ENCODE measurements at regions of chr10 and their contacts with region 1.

Region 1: DNA sequence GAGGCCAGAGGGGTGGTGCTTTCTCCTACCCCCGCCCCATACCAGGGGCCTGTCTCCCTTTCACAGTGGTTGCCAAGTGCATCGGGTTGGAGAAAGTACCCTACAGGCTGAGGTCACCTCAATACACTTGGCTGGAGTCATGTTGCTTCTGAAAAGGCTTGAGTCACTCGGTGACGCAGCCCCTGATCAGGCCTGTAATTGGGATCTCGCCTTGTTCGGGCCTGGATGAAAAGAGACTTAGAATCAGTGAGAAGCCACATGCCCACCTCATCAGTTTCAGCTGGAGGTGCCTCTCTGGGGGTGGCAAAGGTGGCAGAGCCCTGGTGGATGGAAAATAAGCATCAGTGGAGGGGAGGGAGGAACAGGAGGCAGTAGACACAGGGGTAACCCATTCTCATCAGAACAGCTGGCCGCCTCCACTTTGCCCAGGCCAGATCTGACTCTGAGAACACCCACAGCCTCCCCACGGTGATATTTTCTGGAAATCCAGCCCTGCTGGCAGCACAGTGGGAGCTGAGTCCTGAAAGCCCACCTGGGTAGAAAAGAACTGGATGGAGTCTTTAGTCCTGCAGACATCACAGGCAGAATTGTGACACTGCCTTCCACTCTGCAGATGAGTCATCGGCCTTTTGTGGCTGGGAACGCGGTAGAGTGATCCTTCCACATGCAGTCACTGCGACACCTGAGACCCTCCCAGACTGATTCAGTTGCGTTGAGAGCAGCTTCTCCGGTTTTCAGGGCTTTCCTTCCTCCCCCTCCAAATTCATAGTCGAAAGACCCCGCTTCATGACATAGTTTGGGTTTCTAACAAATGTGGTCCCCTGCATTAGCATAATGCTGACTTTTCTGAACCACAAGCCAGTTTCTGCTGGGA is 108.0 kb downstream of the GRK5 start:
- DNase-seq: peak; percentile 41
- ATAC-seq: peak; percentile 51
- H3K4me3 Mint-ChIP-seq: peak overlapping the region; percentile 62
- H3K27ac Mint-ChIP-seq: peak overlapping the region; percentile 88
- H3K4me1 Mint-ChIP-seq: peaks cover 93% of the 10 kb centered on the region
- H3K27me3 Mint-ChIP-seq: no peaks in the 10 kb centered on the region
- CTCF ChIP-seq: no peak

Region 2: DNA sequence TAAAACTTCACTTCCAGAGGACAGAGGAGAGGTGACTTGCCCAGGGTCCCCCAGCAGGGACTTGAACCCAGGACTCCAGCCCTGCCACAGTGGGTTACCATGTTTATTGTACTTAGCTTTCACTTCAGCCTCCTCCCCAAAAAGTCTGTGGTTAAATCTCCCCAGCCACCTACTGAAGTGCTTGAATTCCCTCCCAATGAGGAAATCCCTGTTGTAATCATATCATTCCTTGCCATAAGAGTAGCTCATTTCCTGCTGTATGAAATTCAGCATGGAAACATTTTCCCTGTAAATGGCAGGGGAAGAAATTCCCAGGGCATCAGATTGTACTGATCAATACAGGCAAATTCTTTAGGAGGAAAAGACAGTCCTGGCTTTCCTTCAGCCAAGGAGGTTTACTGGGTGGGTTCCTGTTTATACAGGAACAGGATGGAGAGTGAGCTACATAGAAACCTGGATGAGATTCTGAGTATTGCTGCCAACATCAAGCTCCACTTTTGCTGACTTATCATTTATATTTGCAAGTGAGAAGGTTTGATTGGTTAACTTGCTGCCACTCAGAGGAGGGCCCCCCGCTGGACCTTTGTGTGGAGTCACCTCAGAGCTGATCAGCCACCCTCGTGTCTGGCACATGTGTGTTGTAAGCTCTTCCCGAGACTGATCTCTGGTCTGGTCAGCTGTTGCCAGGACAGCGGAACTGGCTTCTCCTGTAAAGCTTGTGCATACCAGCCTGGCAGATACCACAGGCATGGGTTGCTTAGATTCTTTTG is 1923.7 kb before region 1 on chr10:
- CTCF ChIA-PET with region 1: no interaction called
- POLR2A ChIA-PET with region 1: no interaction called
- intact Hi-C with region 1: no loop called
- DNase-seq: no peak
- ATAC-seq: no peak
- H3K4me3 Mint-ChIP-seq: no peak overlapping the region
- H3K27ac Mint-ChIP-seq: no peak overlapping the region
- H3K4me1 Mint-ChIP-seq: no peaks in the 10 kb centered on the region
- H3K27me3 Mint-ChIP-seq: peaks cover 43% of the 10 kb centered on the region
- CTCF ChIP-seq: no peak

Region 3: GRCh38 chr10:119270762-119271366 is 44.5 kb before region 1 on chr10:
- CTCF ChIA-PET with region 1: no interaction called
- POLR2A ChIA-PET with region 1: interaction called, 13 read pairs
- intact Hi-C with region 1: loop called (anchors 2 kb)
- DNase-seq: peak; percentile 45
- ATAC-seq: peak; percentile 49
- H3K4me3 Mint-ChIP-seq: peak overlapping the region; percentile 69
- H3K27ac Mint-ChIP-seq: peak overlapping the region; percentile 96
- H3K4me1 Mint-ChIP-seq: peaks cover 87% of the 10 kb centered on the region
- H3K27me3 Mint-ChIP-seq: no peaks in the 10 kb centered on the region
- CTCF ChIP-seq: no peak

Region 4: DNA sequence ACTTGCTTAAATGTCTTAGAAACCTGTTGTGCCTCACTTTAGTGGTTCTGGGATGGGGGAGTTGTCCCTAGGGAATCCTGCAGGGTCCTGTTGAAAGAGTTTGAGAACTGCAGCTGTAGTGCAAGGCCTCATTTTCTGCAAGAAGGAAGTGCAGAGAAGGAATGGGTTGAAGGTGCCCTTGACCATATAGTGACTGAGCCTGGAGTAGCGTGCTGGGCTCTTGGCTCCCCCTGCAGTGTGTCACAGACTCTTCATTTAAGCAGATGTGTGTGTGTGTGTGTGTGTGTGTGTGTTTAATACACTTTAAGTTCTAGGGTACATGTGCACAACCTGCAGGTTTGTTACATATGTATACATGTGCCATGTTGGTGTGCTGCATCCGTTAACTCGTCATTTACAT is 15.8 kb before region 1 on chr10:
- CTCF ChIA-PET with region 1: no interaction called
- POLR2A ChIA-PET with region 1: interaction called, 10 read pairs
- intact Hi-C with region 1: no loop called
- DNase-seq: no peak
- ATAC-seq: peak; percentile 40
- H3K4me3 Mint-ChIP-seq: no peak overlapping the region
- H3K27ac Mint-ChIP-seq: peak overlapping the region; percentile 92
- H3K4me1 Mint-ChIP-seq: peaks cover 58% of the 10 kb centered on the region
- H3K27me3 Mint-ChIP-seq: no peaks in the 10 kb centered on the region
- CTCF ChIP-seq: no peak

Region 5: DNA sequence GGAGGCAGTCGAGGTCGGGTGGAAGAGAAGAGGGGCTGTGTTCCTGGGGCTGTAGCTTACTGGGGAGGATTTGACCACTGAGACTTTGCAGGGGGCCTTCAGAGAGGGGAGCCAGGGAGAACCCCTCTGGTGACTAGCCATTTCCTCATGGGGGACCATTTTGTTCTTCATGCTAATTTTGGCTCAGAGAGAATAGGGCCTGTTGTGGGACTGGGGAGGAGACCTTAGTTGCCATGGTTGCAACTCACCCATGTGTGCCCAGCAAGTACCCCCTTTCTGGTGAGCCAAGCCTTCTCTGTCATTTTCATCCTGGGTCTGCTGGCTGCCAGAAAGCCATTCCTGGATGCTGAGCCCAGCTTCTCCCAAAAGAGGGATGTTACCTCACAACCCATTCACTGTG is 12.9 kb after region 1 on chr10:
- CTCF ChIA-PET with region 1: no interaction called
- POLR2A ChIA-PET with region 1: interaction called, 7 read pairs
- intact Hi-C with region 1: loop called (anchors 1 kb)
- DNase-seq: no peak
- ATAC-seq: peak; percentile 34
- H3K4me3 Mint-ChIP-seq: no peak overlapping the region
- H3K27ac Mint-ChIP-seq: peak overlapping the region; percentile 37
- H3K4me1 Mint-ChIP-seq: peaks cover 31% of the 10 kb centered on the region
- H3K27me3 Mint-ChIP-seq: no peaks in the 10 kb centered on the region
- CTCF ChIP-seq: no peak

Region 6: GRCh38 chr10:119368991-119369869 is 53.9 kb after region 1 on chr10:
- CTCF ChIA-PET with region 1: no interaction called
- POLR2A ChIA-PET with region 1: interaction called, 3 read pairs
- intact Hi-C with region 1: loop called (anchors 2 kb)
- DNase-seq: peak; percentile 46
- ATAC-seq: peak; percentile 72
- H3K4me3 Mint-ChIP-seq: peak overlapping the region; percentile 87
- H3K27ac Mint-ChIP-seq: peak overlapping the region; percentile 98
- H3K4me1 Mint-ChIP-seq: peaks cover 66% of the 10 kb centered on the region
- H3K27me3 Mint-ChIP-seq: no peaks in the 10 kb centered on the region
- CTCF ChIP-seq: no peak

Region 7: DNA sequence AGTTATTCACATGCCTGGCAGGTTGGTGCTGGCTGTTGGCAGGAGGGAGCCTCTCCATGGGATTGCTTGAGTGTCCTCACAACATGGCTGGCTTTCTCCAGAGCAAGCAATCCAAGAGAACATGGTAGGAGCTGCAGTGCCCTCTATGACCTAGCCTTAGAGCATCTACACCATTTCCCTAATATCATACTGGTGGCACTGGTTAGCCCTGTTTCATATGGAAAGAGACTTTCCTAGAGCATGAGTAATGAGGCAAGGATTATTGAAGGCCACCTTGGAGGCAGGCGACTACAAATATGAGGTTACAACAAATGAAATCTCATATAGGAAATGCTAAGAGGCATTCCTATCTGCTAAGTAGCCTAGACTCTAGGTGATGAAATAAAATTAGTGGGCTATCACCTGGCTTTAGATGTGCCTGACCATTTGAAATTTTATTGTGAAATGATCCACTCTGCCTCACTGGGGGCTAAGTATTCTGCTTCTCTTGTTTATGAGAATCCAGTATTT is 73.5 kb after region 1 on chr10:
- CTCF ChIA-PET with region 1: no interaction called
- POLR2A ChIA-PET with region 1: no interaction called
- intact Hi-C with region 1: no loop called
- DNase-seq: no peak
- ATAC-seq: no peak
- H3K4me3 Mint-ChIP-seq: no peak overlapping the region
- H3K27ac Mint-ChIP-seq: no peak overlapping the region
- H3K4me1 Mint-ChIP-seq: peaks cover 6% of the 10 kb centered on the region
- H3K27me3 Mint-ChIP-seq: no peaks in the 10 kb centered on the region
- CTCF ChIP-seq: no peak

Region 8: GRCh38 chr10:119416855-119417254 is 101.5 kb after region 1 on chr10:
- CTCF ChIA-PET with region 1: no interaction called
- POLR2A ChIA-PET with region 1: no interaction called
- intact Hi-C with region 1: loop called (anchors 2 kb)
- DNase-seq: peak; percentile 57
- ATAC-seq: peak; percentile 92
- H3K4me3 Mint-ChIP-seq: no peak overlapping the region
- H3K27ac Mint-ChIP-seq: no peak overlapping the region
- H3K4me1 Mint-ChIP-seq: peaks cover 2% of the 10 kb centered on the region
- H3K27me3 Mint-ChIP-seq: no peaks in the 10 kb centered on the region
- CTCF ChIP-seq: peak; percentile 22

Measured in activated B cell treated with CpG ODN at 0.5 μM for 24 hours (primary cell).